ENCODE measurements at regions of chr2 and their contacts with region 1.

Region 1: DNA sequence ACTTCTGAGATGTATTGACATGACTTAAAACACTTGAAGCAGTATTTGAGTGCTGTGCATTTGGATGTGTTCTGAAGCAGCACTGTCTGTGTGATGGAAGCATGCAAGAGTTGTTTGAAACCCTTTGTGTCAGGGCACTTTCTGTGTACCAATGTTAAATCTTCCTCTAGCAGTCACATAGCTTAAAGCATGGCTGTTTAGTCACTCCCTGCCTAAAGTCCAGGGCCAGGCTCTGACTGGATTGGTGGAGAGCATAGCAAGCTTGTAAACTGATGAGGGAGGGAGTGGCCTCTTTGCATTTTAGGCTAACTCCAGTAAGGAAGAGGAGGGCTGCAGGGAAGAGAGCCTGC is 73.5 kb downstream of the MYO1B start:
- DNase-seq: no peak
- H3K4me3 ChIP-seq: no peak overlapping the region
- H3K27ac ChIP-seq: no peak overlapping the region
- H3K4me1 ChIP-seq: peaks cover 1 to 24% (median 16%) of the 10 kb centered on the region in 4 experiments; a peak in 4 of 7 replicates
- H3K27me3 ChIP-seq: no peaks in the 10 kb centered on the region
- CTCF ChIP-seq: no peak
- EP300 ChIP-seq: no peak
- POLR2A ChIP-seq: no peak
- RAD21 ChIP-seq: no peak

Region 2: GRCh38 chr2:191302459-191303139 is 16.1 kb before region 1 on chr2:
- CTCF ChIA-PET with region 1: interaction called, 32 read pairs
- POLR2A ChIA-PET with region 1: interaction called, 4 read pairs
- DNase-seq: no peak
- H3K4me3 ChIP-seq: no peak overlapping the region
- H3K27ac ChIP-seq: no peak overlapping the region
- H3K4me1 ChIP-seq: peaks cover 0 to 5% (median under 1%) of the 10 kb centered on the region in 4 experiments; a peak in 2 of 7 replicates
- H3K27me3 ChIP-seq: no peaks in the 10 kb centered on the region; a peak in 1 of 7 replicates
- CTCF ChIP-seq: peak in 2 of 3 experiments; percentile 34 to 58; a peak in 3 of 4 replicates
- EP300 ChIP-seq: no peak
- POLR2A ChIP-seq: no peak
- RAD21 ChIP-seq: peak; percentile 29 to 49; a peak in 3 of 4 replicates

Measured in H1 (cell line).